ENCODE measurements at regions of chr6 and their contacts with region 1.

Region 1: GRCh38 chr6:26216356-26216885 is 129.2 kb downstream of the HFE start:
- DNase-seq: peak; percentile 97 to 99 (median 99)
- H3K4me3 ChIP-seq: peak overlapping the region; percentile 37 to 92 (median 79)
- H3K27ac ChIP-seq: peak overlapping the region; percentile 67 to 89
- H3K4me1 ChIP-seq: peaks cover 13 to 52% (median 27%) of the 10 kb centered on the region in 4 experiments
- H3K27me3 ChIP-seq: no peaks in the 10 kb centered on the region

Region 2: DNA sequence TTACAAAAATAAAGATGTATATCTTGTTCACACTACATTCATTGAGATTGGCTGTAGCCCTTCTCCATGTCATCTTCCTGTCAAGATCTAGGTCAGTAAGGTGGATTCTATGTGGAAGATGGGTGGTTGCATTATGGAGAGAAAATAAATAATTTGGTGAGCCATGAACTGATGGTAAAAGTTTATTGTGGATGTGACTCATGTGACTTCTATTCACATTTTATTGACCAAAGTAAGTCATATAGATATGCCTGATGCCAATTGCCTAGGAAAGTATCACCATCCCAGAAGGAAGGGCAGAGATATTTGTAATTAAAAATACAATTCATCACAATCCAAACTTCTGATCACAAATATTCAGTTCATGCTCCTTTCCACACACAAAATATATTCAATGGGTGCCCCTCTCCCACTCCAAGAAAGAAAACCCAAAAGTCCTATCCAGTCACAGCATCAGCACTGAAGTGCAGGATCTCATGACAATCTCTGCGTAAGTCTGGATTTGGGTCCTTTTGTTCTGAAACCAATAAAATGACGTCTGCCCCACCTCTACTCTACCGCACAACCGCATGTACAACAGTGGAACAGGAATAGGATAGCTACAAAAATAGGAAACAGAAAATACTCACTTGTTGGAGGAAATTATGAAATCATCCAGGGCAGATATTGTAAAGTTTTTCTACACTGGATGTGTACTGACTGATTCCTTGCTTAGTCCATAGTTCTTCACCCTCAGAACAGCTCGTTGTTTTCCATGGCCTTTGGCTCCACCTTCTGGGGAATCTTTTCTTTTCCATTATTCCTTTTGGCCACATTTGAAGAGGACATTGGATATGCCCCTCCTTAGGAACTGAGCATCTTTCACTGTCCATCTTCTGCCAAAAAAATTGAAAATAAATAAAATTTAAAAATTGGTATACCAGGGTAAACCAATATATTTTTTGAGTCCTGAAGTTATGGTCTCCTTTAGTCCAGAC is 326.3 kb before region 1 on chr6:
- CTCF ChIA-PET with region 1: no interaction called
- POLR2A ChIA-PET with region 1: no interaction called
- DNase-seq: peak; percentile 29 to 61 (median 52)
- H3K4me3 ChIP-seq: no peak overlapping the region
- H3K27ac ChIP-seq: no peak overlapping the region
- H3K4me1 ChIP-seq: no peaks in the 10 kb centered on the region
- H3K27me3 ChIP-seq: no peaks in the 10 kb centered on the region

Region 3: DNA sequence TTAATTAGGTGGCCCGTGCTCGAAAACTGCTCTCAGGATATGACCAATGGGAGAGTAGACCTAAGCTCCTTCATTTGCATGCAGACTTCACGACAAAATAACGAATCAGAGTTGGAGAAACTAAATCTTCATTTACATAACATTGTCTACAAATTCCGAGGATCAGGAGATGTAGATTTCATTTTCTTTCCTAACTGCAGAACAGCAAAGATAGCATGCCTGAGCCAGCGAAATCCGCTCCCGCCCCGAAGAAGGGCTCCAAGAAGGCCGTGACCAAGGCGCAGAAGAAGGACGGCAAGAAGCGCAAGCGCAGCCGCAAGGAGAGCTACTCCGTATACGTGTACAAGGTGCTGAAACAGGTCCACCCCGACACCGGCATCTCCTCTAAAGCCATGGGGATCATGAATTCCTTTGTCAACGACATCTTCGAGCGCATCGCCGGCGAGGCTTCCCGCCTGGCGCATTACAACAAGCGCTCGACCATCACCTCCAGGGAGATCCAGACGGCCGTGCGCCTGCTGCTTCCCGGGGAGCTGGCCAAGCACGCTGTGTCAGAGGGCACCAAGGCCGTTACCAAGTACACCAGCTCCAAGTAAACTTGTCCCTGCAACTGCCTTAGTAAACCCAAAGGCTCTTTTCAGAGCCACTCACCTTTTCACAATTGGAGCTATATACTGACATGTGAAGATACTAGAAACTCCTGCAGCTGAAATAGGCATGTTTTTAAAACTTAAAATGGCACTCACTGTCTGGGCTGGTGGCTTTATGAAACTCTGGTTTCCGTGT is 32.6 kb before region 1 on chr6:
- CTCF ChIA-PET with region 1: interaction called, 19 read pairs
- POLR2A ChIA-PET with region 1: interaction called, 15 read pairs
- DNase-seq: peak; percentile 87 to 92 (median 91)
- H3K4me3 ChIP-seq: peak overlapping the region; percentile 46 to 79 (median 70)
- H3K27ac ChIP-seq: peak overlapping the region in 1 of 2 experiments; percentile 70
- H3K4me1 ChIP-seq: peaks cover 9 to 42% (median 27%) of the 10 kb centered on the region in 4 experiments
- H3K27me3 ChIP-seq: no peaks in the 10 kb centered on the region

Region 4: GRCh38 chr6:26196846-26197648 is 19.4 kb before region 1 on chr6:
- CTCF ChIA-PET with region 1: interaction called, 44 read pairs
- POLR2A ChIA-PET with region 1: interaction called, 92 read pairs
- DNase-seq: peak; percentile 93 to 97 (median 96)
- H3K4me3 ChIP-seq: peak overlapping the region; percentile 50 to 99 (median 96)
- H3K27ac ChIP-seq: peak overlapping the region; percentile 46 to 91
- H3K4me1 ChIP-seq: peaks cover 15 to 46% (median 36%) of the 10 kb centered on the region in 4 experiments
- H3K27me3 ChIP-seq: no peaks in the 10 kb centered on the region

Region 5: GRCh38 chr6:26204332-26205165 is 11.9 kb before region 1 on chr6:
- CTCF ChIA-PET with region 1: interaction called, 44 read pairs
- POLR2A ChIA-PET with region 1: interaction called, 100 read pairs
- DNase-seq: peak; percentile 98 to 99 (median 99)
- H3K4me3 ChIP-seq: peak overlapping the region; percentile 75 to 97 (median 87)
- H3K27ac ChIP-seq: peak overlapping the region; percentile 94 to 97
- H3K4me1 ChIP-seq: peaks cover 19 to 50% (median 38%) of the 10 kb centered on the region in 4 experiments
- H3K27me3 ChIP-seq: no peaks in the 10 kb centered on the region

Region 6: GRCh38 chr6:26234421-26235296 is 18.2 kb after region 1 on chr6:
- CTCF ChIA-PET with region 1: interaction called, 23 read pairs
- POLR2A ChIA-PET with region 1: interaction called, 48 read pairs
- DNase-seq: peak; percentile 76 to 93 (median 93)
- H3K4me3 ChIP-seq: peak overlapping the region; percentile 41 to 88 (median 80)
- H3K27ac ChIP-seq: peak overlapping the region; percentile 79 to 91
- H3K4me1 ChIP-seq: peaks cover 7 to 28% (median 22%) of the 10 kb centered on the region in 4 experiments
- H3K27me3 ChIP-seq: no peaks in the 10 kb centered on the region

Region 7: DNA sequence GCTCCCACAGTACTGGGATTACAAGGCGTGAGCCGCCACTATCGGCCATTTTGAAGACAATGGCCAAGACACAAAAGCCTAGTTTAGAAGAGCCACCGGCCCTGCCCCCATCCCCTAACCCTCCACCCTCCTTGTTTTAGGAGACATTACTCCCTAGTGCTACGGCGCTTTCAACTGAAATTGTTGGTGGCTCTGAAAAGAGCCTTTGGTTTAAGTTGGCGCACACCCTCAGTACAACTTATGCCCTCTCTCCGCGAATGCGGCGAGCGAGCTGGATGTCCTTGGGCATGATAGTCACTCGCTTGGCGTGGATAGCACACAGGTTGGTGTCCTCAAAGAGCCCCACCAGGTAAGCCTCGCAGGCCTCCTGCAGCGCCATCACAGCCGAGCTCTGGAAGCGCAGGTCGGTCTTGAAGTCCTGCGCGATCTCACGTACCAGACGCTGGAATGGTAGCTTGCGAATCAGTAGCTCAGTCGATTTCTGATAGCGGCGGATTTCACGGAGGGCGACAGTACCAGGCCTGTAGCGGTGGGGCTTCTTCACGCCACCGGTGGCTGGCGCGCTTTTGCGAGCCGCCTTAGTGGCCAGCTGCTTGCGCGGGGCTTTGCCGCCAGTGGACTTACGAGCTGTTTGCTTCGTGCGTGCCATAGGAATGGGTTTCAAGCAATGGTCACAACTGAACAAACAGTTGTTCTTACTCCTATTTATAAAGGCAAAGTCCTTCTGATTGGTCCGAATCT is 33.7 kb after region 1 on chr6:
- CTCF ChIA-PET with region 1: interaction called, 28 read pairs
- POLR2A ChIA-PET with region 1: interaction called, 27 read pairs
- DNase-seq: peak; percentile 85 to 92 (median 89)
- H3K4me3 ChIP-seq: peak overlapping the region; percentile 72 to 96 (median 82)
- H3K27ac ChIP-seq: peak overlapping the region; percentile 80 to 94
- H3K4me1 ChIP-seq: peaks cover 9 to 34% (median 20%) of the 10 kb centered on the region in 4 experiments
- H3K27me3 ChIP-seq: no peaks in the 10 kb centered on the region

Region 8: DNA sequence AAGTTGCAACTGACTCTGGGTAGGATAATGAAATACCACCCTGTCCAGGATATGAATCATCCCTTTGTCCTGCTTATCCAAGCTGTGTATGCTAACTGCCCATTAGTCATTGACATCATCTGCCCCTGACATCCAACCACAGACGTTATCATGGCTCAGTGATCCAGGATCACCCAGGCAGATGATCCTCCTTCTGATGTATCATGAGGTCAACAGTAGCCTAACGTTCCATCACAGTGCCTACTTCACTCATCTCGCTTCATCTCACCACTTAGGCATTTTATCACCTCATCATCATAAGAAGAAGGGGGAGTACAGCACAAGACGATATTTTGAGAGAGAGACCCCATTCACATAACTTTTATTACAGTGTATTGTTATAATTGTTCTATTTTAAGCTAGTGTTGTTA is 135.1 kb after region 1 on chr6:
- CTCF ChIA-PET with region 1: no interaction called
- POLR2A ChIA-PET with region 1: no interaction called
- DNase-seq: peak in 1 of 3 donors; percentile 36
- H3K4me3 ChIP-seq: no peak overlapping the region
- H3K27ac ChIP-seq: no peak overlapping the region
- H3K4me1 ChIP-seq: no peaks in the 10 kb centered on the region
- H3K27me3 ChIP-seq: no peaks in the 10 kb centered on the region

Region 9: DNA sequence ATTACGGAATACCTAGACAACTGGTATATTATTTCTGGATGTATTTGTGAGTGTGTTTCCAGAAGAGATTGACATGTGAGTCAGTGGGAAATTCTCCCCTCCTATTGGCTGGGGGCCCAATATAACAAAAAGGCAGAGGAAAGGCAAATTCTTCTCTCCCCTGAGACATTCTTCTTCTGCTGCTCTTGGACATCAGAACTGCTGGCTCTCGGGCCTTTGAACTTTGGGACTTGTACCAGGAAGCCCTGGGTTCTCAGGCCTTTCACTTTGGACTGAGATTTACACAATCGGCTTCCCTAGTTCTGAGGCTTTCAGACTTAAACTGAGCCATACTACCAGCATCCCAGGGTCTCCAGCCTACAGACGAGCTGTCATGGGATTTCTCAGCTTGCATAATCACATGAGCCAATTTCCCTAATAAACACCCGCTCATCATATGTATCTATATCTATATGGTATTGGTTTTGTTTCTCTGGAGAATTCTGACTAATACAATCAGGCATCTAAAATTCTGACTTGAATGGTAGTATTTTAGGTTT is 216.3 kb after region 1 on chr6:
- CTCF ChIA-PET with region 1: no interaction called
- POLR2A ChIA-PET with region 1: no interaction called
- DNase-seq: no peak
- H3K4me3 ChIP-seq: no peak overlapping the region
- H3K27ac ChIP-seq: no peak overlapping the region
- H3K4me1 ChIP-seq: no peaks in the 10 kb centered on the region
- H3K27me3 ChIP-seq: no peaks in the 10 kb centered on the region